CD4-positive, alpha-beta memory T cell (primary cell): ENCODE measurements at regions of chr5 and their contacts with region 1.

Region 1: GRCh38 chr5:56838409-56839039 is 23.2 kb downstream of the MAP3K1 start:
- DNase-seq: peak in 4 of 5 donors; percentile 64 to 69 (median 64)
- H3K4me3 ChIP-seq: peak overlapping the region in 1 of 2 donors; percentile 9
- H3K4me3 Mint-ChIP-seq: peak overlapping the region in 7 of 8 donors; percentile 43 to 88 (median 70)
- H3K27ac ChIP-seq: peak overlapping the region; percentile 45
- H3K27ac Mint-ChIP-seq: peak overlapping the region; percentile 67 to 92 (median 92)
- H3K4me1 ChIP-seq: peaks cover 99% of the 10 kb centered on the region
- H3K4me1 Mint-ChIP-seq: peaks cover 77 to 95% (median 87%) of the 10 kb centered on the region in 4 donors
- H3K27me3 ChIP-seq: no peaks in the 10 kb centered on the region
- H3K27me3 Mint-ChIP-seq: no peaks in the 10 kb centered on the region

Region 2: DNA sequence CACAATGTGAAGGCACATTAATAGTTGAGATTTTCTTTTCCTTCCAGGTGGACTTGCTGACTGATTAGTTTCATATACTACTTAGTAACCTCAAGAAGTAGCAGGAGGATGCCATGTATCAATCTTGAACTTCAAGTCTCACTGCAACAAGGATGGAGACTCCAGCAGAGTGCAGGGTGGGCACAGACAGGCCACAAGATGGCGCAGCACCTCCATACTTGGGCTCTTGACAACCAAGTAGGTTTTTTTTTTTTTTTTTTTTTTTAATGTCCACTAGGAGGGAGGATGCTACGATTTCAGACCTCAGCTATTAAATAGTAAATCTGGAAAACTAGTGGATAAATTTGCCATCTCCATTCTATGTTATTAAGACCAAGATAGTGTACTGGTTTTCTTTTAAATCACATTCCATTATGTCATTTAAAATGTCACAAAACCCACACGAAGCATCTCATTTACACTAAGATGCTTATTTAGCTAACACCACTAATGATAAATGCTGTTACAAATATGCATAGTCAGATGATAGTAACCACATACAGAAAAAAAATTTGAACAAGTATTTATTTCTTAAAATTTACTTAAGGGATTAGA is 902.3 kb before region 1 on chr5:
- CTCF ChIA-PET with region 1: interaction called, 9 read pairs
- POLR2A ChIA-PET with region 1: no interaction called
- intact Hi-C with region 1: loop called (anchors 1 kb)
- DNase-seq: peak; percentile 61 to 76 (median 65)
- H3K4me3 ChIP-seq: no peak overlapping the region
- H3K4me3 Mint-ChIP-seq: no peak overlapping the region
- H3K27ac ChIP-seq: no peak overlapping the region
- H3K27ac Mint-ChIP-seq: peak overlapping the region in 4 of 7 donors; percentile 25 to 73 (median 42)
- H3K4me1 ChIP-seq: peaks cover 5% of the 10 kb centered on the region
- H3K4me1 Mint-ChIP-seq: peaks cover 0 to 8% (median 4%) of the 10 kb centered on the region in 4 donors
- H3K27me3 ChIP-seq: no peaks in the 10 kb centered on the region
- H3K27me3 Mint-ChIP-seq: no peaks in the 10 kb centered on the region

Region 3: DNA sequence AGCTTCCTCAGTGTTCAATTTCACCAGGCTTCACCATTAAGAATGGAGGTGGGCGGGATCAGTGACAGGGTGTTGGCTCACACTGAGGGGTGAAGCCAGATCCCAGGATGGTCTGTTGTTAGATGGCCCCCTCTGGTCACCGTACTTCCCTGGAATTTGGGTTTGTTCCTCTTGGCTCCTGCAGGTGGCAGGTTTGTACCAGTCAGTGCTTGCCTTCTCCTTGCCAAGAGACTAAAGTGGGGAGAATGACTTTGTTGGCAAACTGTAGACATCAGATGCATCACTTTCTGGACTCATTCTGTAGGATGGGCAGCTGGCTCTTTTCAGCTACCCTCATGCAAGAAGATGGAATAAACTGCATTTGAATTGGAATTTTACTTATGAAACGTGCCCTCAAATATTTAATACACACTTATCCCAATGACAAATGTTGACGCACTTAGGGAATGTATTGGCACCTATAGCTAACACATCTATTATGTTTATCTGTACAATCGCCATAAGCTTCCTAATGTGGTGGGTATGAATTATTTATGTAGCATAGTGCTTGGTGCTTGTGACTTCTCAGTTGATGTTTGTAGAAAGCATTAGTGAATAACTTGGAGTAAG is 574.0 kb before region 1 on chr5:
- CTCF ChIA-PET with region 1: interaction called, 190 read pairs
- POLR2A ChIA-PET with region 1: interaction called, 4 read pairs
- intact Hi-C with region 1: no loop called
- DNase-seq: peak; percentile 9 to 36 (median 21)
- H3K4me3 ChIP-seq: no peak overlapping the region
- H3K4me3 Mint-ChIP-seq: no peak overlapping the region
- H3K27ac ChIP-seq: no peak overlapping the region
- H3K27ac Mint-ChIP-seq: peak overlapping the region in 1 of 7 donors; percentile 3
- H3K4me1 ChIP-seq: no peaks in the 10 kb centered on the region
- H3K4me1 Mint-ChIP-seq: peaks cover 0 to 4% (median 1%) of the 10 kb centered on the region in 4 donors
- H3K27me3 ChIP-seq: no peaks in the 10 kb centered on the region
- H3K27me3 Mint-ChIP-seq: no peaks in the 10 kb centered on the region

Region 4: GRCh38 chr5:56475689-56476486 is 362.6 kb before region 1 on chr5:
- CTCF ChIA-PET with region 1: interaction called, 19 read pairs
- POLR2A ChIA-PET with region 1: interaction called, 19 read pairs
- intact Hi-C with region 1: loop called (anchors 1 kb)
- DNase-seq: no peak
- H3K4me3 ChIP-seq: no peak overlapping the region
- H3K4me3 Mint-ChIP-seq: peak overlapping the region in 2 of 8 donors; percentile 1 to 13
- H3K27ac ChIP-seq: no peak overlapping the region
- H3K27ac Mint-ChIP-seq: peak overlapping the region in 6 of 7 donors; percentile 1 to 66 (median 48)
- H3K4me1 ChIP-seq: peaks cover 50% of the 10 kb centered on the region
- H3K4me1 Mint-ChIP-seq: peaks cover 29 to 46% (median 37%) of the 10 kb centered on the region in 4 donors
- H3K27me3 ChIP-seq: no peaks in the 10 kb centered on the region
- H3K27me3 Mint-ChIP-seq: no peaks in the 10 kb centered on the region

Region 5: DNA sequence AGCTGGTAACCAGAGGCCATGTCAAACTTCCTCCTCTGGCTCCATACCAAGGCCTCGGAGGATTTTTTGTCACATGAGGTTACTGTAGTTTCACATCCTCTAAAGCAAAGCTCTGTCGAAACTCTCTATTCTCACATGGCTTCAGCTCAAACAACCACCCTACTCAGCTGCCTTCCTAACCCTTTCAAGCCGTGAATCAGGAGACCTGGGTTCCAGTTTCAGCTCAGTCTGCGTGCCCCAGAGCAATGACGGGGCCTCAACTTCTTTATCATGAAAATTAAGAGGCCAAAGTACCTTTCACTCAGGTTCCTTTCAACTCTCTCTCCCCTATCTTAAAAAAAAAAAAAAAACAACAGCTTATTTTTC is 168.4 kb before region 1 on chr5:
- CTCF ChIA-PET with region 1: interaction called, 12 read pairs
- POLR2A ChIA-PET with region 1: no interaction called
- intact Hi-C with region 1: no loop called
- DNase-seq: peak in 4 of 5 donors; percentile 26 to 67 (median 48)
- H3K4me3 ChIP-seq: no peak overlapping the region
- H3K4me3 Mint-ChIP-seq: peak overlapping the region in 7 of 8 donors; percentile 54 to 89 (median 76)
- H3K27ac ChIP-seq: peak overlapping the region; percentile 48
- H3K27ac Mint-ChIP-seq: peak overlapping the region; percentile 89 to 97 (median 93)
- H3K4me1 ChIP-seq: peaks cover 54% of the 10 kb centered on the region
- H3K4me1 Mint-ChIP-seq: peaks cover 23 to 52% (median 44%) of the 10 kb centered on the region in 4 donors
- H3K27me3 ChIP-seq: no peaks in the 10 kb centered on the region
- H3K27me3 Mint-ChIP-seq: no peaks in the 10 kb centered on the region

Region 6: GRCh38 chr5:56827049-56827448 is 11.5 kb before region 1 on chr5:
- CTCF ChIA-PET with region 1: interaction called, 58 read pairs
- POLR2A ChIA-PET with region 1: interaction called, 30 read pairs
- intact Hi-C with region 1: loop called (anchors 1 kb)
- DNase-seq: peak in 1 of 5 donors; percentile 40
- H3K4me3 ChIP-seq: no peak overlapping the region
- H3K4me3 Mint-ChIP-seq: peak overlapping the region; percentile 67 to 86 (median 74)
- H3K27ac ChIP-seq: peak overlapping the region; percentile 53
- H3K27ac Mint-ChIP-seq: peak overlapping the region; percentile 86 to 95 (median 88)
- H3K4me1 ChIP-seq: peaks cover 98% of the 10 kb centered on the region
- H3K4me1 Mint-ChIP-seq: peaks cover 75 to 98% (median 88%) of the 10 kb centered on the region in 4 donors
- H3K27me3 ChIP-seq: no peaks in the 10 kb centered on the region
- H3K27me3 Mint-ChIP-seq: no peaks in the 10 kb centered on the region

Region 7: DNA sequence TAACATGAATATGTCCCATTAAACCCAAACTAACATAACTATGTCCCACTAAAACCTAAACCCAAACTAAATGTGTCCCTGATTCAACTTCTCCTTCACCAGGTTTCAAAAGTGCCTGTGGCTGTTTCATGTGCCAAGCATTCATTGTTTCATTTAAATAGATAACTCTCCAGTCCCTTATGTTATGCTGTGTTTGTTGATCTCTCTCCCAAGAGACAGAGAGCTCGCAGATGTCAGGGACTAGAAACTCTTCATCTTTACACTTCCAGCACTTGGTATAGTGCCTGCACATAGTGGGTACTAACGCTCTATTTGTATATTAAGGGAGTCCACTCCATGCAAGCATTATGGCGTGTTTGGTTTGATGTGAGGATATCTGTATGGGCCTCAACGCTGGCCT is 453.4 kb after region 1 on chr5:
- CTCF ChIA-PET with region 1: no interaction called
- POLR2A ChIA-PET with region 1: no interaction called
- intact Hi-C with region 1: no loop called
- DNase-seq: no peak
- H3K4me3 ChIP-seq: no peak overlapping the region
- H3K4me3 Mint-ChIP-seq: no peak overlapping the region
- H3K27ac ChIP-seq: no peak overlapping the region
- H3K27ac Mint-ChIP-seq: no peak overlapping the region
- H3K4me1 ChIP-seq: no peaks in the 10 kb centered on the region
- H3K4me1 Mint-ChIP-seq: no peaks in the 10 kb centered on the region
- H3K27me3 ChIP-seq: no peaks in the 10 kb centered on the region
- H3K27me3 Mint-ChIP-seq: peaks cover 2 to 3% of the 10 kb centered on the region in 2 donors